CD14-positive monocyte (primary cell): ENCODE measurements at regions of chr21 and their contacts with region 1.

Region 1: DNA sequence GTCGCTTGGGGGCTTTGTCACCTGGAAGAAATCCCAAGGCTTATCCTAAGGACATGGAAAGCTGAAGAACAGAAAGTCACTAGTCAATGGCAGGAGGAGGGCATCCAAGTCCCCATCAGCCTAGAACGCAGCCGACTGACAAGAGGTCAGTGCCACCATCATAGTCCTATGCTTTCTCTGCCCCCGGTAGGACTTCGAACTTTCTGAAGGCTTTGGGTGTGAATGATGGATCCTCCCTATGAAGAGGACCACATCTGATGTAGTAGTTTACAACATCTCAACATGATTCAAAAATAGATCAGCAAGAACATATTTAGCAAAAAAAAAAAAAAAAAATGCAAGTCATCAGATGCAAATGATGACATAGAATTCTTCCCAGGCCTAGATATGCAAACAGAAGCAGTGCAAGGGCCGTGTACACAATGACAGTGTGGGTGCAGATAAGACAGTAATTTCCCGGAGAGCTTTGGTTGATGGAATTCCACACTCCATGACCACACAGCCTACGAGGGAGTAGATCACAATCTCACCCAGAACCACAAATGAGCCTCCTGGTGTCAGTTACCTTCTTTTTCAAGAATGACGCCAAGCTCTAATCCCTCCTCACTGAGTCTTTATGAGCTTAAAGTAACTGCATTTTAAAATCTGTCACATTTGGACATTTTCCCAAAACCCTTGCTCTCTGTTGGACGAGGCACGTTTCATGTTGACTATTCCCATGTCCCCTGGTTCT is 88.2 kb downstream of the PSMG1 start:
- DNase-seq: peak; percentile 46 to 74 (median 68)
- H3K4me3 ChIP-seq: peak overlapping the region in 1 of 3 experiments; percentile 29
- H3K4me3 Mint-ChIP-seq: peak overlapping the region in 1 of 2 donors; percentile 76
- H3K27ac ChIP-seq: peak overlapping the region; percentile 61 to 86
- H3K27ac Mint-ChIP-seq: peak overlapping the region; percentile 96 to 100 (median 99)
- H3K4me1 ChIP-seq: peaks cover 77 to 81% of the 10 kb centered on the region in 2 donors
- H3K4me1 Mint-ChIP-seq: peaks cover 81% of the 10 kb centered on the region
- H3K27me3 ChIP-seq: no peaks in the 10 kb centered on the region
- H3K27me3 Mint-ChIP-seq: peaks cover 0 to 2% (median 0%) of the 10 kb centered on the region in 3 donors
- CTCF ChIP-seq: no peak

Region 2: DNA sequence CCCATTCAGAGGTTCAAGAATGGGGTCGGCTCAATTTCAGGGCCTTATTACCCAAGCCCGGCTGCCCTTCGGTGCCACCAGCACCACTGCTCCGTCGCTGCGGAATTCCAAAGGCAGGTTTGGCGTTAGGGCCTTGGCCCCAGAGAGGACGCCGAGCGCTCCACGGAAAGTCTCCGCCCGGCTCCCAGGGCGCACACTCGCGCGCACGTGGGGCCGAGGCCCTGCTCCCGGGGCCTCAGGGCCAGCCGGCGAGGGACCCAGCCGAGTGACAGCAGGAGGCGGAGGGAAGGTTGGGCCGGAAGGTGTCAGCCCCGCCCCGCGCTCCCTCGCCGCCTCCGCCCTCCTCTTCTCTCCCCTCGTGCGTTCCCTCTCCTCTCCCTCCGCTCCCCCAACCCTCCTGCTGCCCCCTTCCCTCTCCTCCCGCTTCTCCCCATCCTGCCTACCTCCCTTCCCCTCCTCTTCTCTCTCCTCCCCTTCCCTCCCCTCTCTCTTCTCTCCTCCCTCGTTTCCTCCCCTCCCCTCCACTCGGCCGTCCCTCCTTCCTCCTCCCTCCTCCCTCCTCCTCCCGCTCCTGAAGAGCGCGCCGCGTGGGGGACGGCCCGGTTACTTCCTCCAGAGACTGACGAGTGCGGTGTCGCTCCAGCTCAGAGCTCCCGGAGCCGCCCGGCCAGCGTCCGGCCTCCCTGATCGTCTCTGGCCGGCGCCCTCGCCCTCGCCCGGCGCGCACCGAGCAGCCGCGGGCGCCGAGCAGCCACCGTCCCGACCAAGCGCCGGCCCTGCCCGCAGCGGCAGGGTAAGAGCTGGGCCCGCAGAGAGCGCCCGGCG is 289.5 kb before region 1 on chr21 and contains the start of gene ETS2:
- intact Hi-C with region 1: loop called in 1 of 2 experiments (anchors 5 kb)
- DNase-seq: peak; percentile 88 to 95 (median 93)
- H3K4me3 ChIP-seq: peak within 1 kb of the TSS; percentile 65 to 95 (median 85)
- H3K4me3 Mint-ChIP-seq: peak within 1 kb of the TSS; percentile 89 to 95
- H3K27ac ChIP-seq: peak within 1 kb of the TSS; percentile 89 to 90
- H3K27ac Mint-ChIP-seq: peak within 1 kb of the TSS; percentile 86 to 98 (median 95)
- H3K4me1 ChIP-seq: peaks cover 48 to 49% of the 10 kb centered on the region in 2 donors
- H3K4me1 Mint-ChIP-seq: peaks cover 39% of the 10 kb centered on the region
- H3K27me3 ChIP-seq: no peaks in the 10 kb centered on the region
- H3K27me3 Mint-ChIP-seq: peaks cover 1 to 2% (median 2%) of the 10 kb centered on the region in 3 donors
- CTCF ChIP-seq: peak; percentile 7
- polyA plus RNA-seq, gene ETS2: 54.2 to 150 (median 59.5) TPM

Region 3: DNA sequence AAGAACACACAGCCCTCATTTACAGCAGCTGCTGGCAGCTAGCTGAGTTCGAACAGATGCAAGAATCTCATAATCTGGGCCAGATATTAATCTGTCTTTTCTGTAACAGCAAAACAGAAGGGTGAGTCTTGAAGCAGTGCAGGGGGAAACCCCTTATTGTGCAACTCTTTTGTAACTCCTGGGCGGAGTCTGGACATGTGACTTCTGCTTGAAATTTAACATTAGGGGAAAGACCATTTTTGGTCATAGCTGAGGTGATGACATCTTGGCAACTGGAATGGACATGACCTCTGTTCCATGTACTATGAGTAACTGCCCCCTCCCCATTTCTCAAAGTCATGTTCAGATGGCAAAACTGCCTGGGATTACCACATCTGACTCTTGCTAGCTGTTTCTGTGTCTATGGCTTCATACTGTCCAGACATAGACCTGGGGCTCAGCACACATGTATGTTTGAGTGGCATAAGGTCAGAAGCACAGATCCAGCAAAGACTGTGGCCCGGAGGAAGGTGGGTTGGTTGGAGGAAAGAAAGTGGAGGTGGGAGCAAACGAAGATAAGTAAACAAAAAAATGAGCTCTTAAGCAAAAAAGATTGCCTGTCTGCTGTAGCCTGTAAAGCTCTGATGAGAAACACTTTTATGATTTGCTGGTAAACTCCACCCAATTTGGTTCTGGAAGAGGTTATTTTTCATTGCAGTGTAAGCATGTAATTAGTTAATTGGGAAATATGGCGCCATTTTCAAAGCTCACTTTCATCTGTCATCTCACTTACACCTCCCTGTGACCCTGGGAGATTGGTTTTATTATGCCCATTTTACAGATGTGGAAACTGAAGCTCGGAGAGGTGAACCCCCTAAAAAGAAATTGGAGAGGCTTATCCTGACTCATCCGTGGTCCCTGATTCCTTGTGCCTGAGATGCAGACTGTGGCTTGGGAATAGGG is 263.2 kb before region 1 on chr21:
- intact Hi-C with region 1: loop called in 1 of 2 experiments (anchors 10 kb)
- DNase-seq: peak; percentile 99 to 100 (median 99)
- H3K4me3 ChIP-seq: peak overlapping the region in 1 of 3 experiments; percentile 58
- H3K4me3 Mint-ChIP-seq: peak overlapping the region; percentile 39 to 82
- H3K27ac ChIP-seq: peak overlapping the region; percentile 89 to 95
- H3K27ac Mint-ChIP-seq: peak overlapping the region; percentile 94 to 99 (median 98)
- H3K4me1 ChIP-seq: peaks cover 26 to 27% of the 10 kb centered on the region in 2 donors
- H3K4me1 Mint-ChIP-seq: peaks cover 31% of the 10 kb centered on the region
- H3K27me3 ChIP-seq: no peaks in the 10 kb centered on the region
- H3K27me3 Mint-ChIP-seq: no peaks in the 10 kb centered on the region
- CTCF ChIP-seq: no peak

Region 4: GRCh38 chr21:38979228-38980121 is 115.5 kb before region 1 on chr21:
- intact Hi-C with region 1: no loop called
- DNase-seq: peak; percentile 70 to 84 (median 72)
- H3K4me3 ChIP-seq: no peak overlapping the region
- H3K4me3 Mint-ChIP-seq: peak overlapping the region in 1 of 2 donors; percentile 60
- H3K27ac ChIP-seq: peak overlapping the region; percentile 11 to 67
- H3K27ac Mint-ChIP-seq: peak overlapping the region; percentile 72 to 95 (median 92)
- H3K4me1 ChIP-seq: peaks cover 23 to 29% of the 10 kb centered on the region in 2 donors
- H3K4me1 Mint-ChIP-seq: peaks cover 27% of the 10 kb centered on the region
- H3K27me3 ChIP-seq: no peaks in the 10 kb centered on the region
- H3K27me3 Mint-ChIP-seq: no peaks in the 10 kb centered on the region
- CTCF ChIP-seq: no peak

Region 5: GRCh38 chr21:39016740-39017315 is 78.2 kb before region 1 on chr21:
- intact Hi-C with region 1: loop called in 1 of 2 experiments (anchors 5 kb)
- DNase-seq: peak; percentile 81 to 93 (median 90)
- H3K4me3 ChIP-seq: peak overlapping the region in 1 of 3 experiments; percentile 22
- H3K4me3 Mint-ChIP-seq: peak overlapping the region in 1 of 2 donors; percentile 42
- H3K27ac ChIP-seq: peak overlapping the region; percentile 39 to 50
- H3K27ac Mint-ChIP-seq: peak overlapping the region; percentile 63 to 89 (median 84)
- H3K4me1 ChIP-seq: peaks cover 67 to 83% of the 10 kb centered on the region in 2 donors
- H3K4me1 Mint-ChIP-seq: peaks cover 50% of the 10 kb centered on the region
- H3K27me3 ChIP-seq: no peaks in the 10 kb centered on the region
- H3K27me3 Mint-ChIP-seq: peaks cover 0 to 3% (median 3%) of the 10 kb centered on the region in 3 donors
- CTCF ChIP-seq: no peak

Region 6: DNA sequence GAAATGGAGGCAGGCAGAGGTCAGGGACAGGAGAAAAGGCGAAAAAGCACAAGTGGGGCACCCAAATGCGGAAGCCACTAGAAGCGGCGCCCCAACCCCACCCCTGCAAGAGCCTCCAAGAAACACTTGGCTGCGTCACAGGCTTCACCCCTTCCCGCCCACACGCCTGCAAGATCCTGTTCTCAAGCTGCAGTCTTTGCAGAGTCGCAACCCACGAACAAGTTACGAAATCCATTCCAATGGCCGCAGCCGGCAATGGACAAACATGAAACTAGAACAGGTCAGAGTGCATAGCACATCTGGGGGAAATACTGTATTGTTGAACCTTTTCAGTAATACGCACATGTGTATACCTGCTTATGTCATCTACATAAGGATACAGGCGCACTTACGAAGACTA is 15.4 kb before region 1 on chr21:
- intact Hi-C with region 1: loop called in 1 of 2 experiments (anchors 2 kb)
- DNase-seq: peak; percentile 94 to 97 (median 94)
- H3K4me3 ChIP-seq: peak overlapping the region in 1 of 3 experiments; percentile 27
- H3K4me3 Mint-ChIP-seq: peak overlapping the region in 1 of 2 donors; percentile 75
- H3K27ac ChIP-seq: peak overlapping the region; percentile 65 to 80
- H3K27ac Mint-ChIP-seq: peak overlapping the region; percentile 92 to 99 (median 96)
- H3K4me1 ChIP-seq: peaks cover 52 to 56% of the 10 kb centered on the region in 2 donors
- H3K4me1 Mint-ChIP-seq: peaks cover 44% of the 10 kb centered on the region
- H3K27me3 ChIP-seq: no peaks in the 10 kb centered on the region
- H3K27me3 Mint-ChIP-seq: peaks cover 0 to 5% (median 0%) of the 10 kb centered on the region in 3 donors
- CTCF ChIP-seq: no peak